Transverse colon (tissue), 4 donors: ENCODE measurements at regions of chr13 and their contacts with region 1.

Region 1: DNA sequence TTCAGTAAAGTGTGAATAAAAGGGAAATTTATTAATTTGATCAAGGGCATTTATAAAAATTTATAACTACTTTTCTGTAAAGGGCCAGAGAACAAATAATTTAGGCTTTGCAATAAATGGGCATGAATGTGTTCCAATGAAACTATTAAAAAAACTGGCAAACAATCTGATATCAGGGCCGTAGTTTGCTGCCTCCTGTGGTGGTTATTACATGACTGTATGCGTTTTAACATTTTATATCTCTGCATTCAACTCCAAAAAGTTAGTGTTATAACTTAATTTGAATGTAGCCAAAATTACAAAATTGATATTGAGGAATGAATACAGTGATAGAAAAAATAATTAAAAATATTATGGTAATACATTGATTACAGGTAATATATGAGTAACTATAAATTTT is 80.5 kb upstream of the POSTN start:
- DNase-seq: no peak
- H3K4me3 ChIP-seq: no peak overlapping the region
- H3K27ac ChIP-seq: no peak overlapping the region
- H3K4me1 ChIP-seq: no peaks in the 10 kb centered on the region
- H3K27me3 ChIP-seq: no peaks in the 10 kb centered on the region
- CTCF ChIP-seq: no peak
- EP300 ChIP-seq: no peak
- POLR2A ChIP-seq: no peak

Region 2: DNA sequence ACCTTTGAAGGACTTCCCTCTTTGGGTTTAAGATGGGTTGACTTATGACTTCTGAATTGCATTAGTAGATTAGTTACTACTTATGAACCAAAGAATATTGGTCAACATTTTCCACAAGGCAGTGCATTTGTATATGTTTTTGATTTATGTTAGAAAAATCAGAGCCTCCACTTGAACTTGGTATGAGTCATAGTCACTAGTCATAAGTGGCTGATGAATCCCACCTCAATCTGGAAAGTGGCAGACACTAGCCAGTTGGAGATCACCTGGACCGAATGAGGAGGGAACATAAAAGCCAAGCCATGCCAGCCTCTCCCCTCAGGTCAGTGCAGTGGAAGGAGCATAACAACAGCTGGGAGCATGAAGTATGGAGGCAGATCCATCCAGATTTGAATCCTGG is 1293.6 kb before region 1 on chr13:
- in situ Hi-C with region 1: no loop called
- intact Hi-C with region 1: no loop called
- DNase-seq: no peak
- H3K4me3 ChIP-seq: no peak overlapping the region
- H3K27ac ChIP-seq: no peak overlapping the region
- H3K4me1 ChIP-seq: no peaks in the 10 kb centered on the region
- H3K27me3 ChIP-seq: no peaks in the 10 kb centered on the region
- CTCF ChIP-seq: no peak
- EP300 ChIP-seq: no peak
- POLR2A ChIP-seq: no peak

Region 3: GRCh38 chr13:36717966-36718545 is 961.0 kb before region 1 on chr13:
- in situ Hi-C with region 1: no loop called
- intact Hi-C with region 1: no loop called
- DNase-seq: no peak
- H3K4me3 ChIP-seq: no peak overlapping the region
- H3K27ac ChIP-seq: no peak overlapping the region
- H3K4me1 ChIP-seq: no peaks in the 10 kb centered on the region
- H3K27me3 ChIP-seq: no peaks in the 10 kb centered on the region
- CTCF ChIP-seq: no peak
- EP300 ChIP-seq: no peak
- POLR2A ChIP-seq: no peak

Region 4: DNA sequence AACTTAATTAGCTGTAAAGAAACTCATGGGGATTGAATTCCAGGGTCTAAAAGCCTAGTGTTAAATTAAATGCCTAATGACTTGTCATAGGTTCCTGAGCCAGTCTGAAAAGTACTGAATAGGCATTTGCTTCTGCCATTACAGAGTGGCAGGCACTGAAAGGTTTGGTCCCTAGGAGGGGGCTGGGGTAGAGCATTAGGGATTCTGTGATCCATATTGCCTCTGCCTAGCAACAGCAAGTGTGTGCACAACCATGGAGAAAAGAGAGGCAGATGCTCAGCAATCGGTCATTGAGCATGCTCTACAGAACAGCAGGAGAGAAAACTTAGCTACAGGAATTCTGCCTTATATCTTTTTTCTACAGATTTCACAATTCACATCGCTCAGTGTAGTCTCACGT is 57.0 kb after region 1 on chr13:
- in situ Hi-C with region 1: loop called in 1 of 4 experiments (anchors 10 kb)
- intact Hi-C with region 1: no loop called
- DNase-seq: no peak
- H3K4me3 ChIP-seq: no peak overlapping the region
- H3K27ac ChIP-seq: no peak overlapping the region
- H3K4me1 ChIP-seq: peaks cover 0 to 3% (median 0%) of the 10 kb centered on the region in 4 donors
- H3K27me3 ChIP-seq: no peaks in the 10 kb centered on the region
- CTCF ChIP-seq: no peak
- EP300 ChIP-seq: no peak
- POLR2A ChIP-seq: no peak